Heart left ventricle (tissue), 16 donors: ENCODE measurements at regions of chr11 and their contacts with region 1.

Region 1: GRCh38 chr11:96464700-96465307 is 75.0 kb downstream of the JRKL start:
- DNase-seq: peak in 1 of 5 donors; percentile 12
- ATAC-seq: peak; percentile 78 to 95 (median 90)
- H3K4me3 ChIP-seq: peak overlapping the region in 7 of 12 donors; percentile 31 to 47 (median 37)
- H3K27ac ChIP-seq: peak overlapping the region in 1 of 12 donors; percentile 1
- H3K4me1 ChIP-seq: peaks cover 0 to 22% (median 2%) of the 10 kb centered on the region in 12 donors
- H3K27me3 ChIP-seq: no peaks in the 10 kb centered on the region
- CTCF ChIP-seq: peak; percentile 54 to 86 (median 71)
- POLR2A ChIP-seq: no peak

Region 2: DNA sequence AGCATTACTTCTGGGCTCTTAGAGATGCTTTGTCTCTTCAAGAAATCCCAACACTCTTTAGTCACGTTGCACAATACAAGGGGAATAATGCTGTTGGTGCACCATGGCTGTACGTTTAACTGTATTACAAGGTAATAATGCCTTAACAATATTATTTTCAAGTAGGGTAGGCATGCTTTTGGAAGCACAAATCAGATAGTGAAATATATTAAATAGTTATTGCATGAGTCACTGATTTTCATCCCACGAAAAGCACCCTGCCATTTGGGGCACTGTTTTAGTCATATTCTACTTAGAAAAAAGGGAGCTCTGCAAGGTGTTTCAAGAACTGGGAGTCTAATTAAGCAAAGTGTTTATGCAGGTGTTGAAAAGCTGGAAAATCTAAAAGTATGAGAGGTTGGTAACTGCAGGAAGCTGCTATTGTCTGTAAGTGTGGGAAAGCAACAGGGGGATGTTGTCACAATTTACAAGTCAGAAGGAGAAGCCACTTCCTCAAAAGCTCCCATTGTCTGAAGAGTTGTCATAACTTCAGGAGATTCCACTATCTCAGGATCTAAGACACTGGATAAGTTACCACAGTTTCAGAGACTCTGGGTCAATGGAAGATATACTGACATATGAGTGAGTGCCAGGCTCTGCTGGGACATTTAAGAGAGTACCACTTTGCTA is 143.2 kb after region 1 on chr11:
- intact Hi-C with region 1: no loop called
- DNase-seq: no peak
- ATAC-seq: no peak
- H3K4me3 ChIP-seq: no peak overlapping the region
- H3K27ac ChIP-seq: no peak overlapping the region
- H3K4me1 ChIP-seq: no peaks in the 10 kb centered on the region
- H3K27me3 ChIP-seq: no peaks in the 10 kb centered on the region
- CTCF ChIP-seq: no peak
- POLR2A ChIP-seq: no peak

Region 3: DNA sequence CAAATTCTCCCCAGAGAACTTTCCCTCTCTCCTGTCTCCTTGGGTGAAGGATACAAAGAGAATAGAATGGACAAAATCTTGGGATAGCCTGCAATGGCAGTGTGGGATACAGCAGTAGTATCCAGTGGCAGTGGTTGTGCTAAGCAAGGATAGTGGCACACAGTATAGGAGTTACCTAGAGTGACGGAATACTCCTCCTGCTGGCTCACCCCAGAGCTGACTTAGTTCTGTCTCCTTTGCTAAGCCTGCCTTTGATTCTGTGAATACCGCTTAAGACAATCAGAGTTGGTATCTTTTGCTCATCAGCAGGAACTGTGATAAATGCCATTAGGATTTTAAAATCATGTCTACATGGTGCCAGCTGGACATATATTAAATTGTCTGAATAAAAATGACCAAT is 329.3 kb after region 1 on chr11:
- intact Hi-C with region 1: loop called in 3 of 10 experiments (anchors 5 to 10 kb)
- DNase-seq: no peak
- ATAC-seq: no peak
- H3K4me3 ChIP-seq: no peak overlapping the region
- H3K27ac ChIP-seq: no peak overlapping the region
- H3K4me1 ChIP-seq: peaks cover 0 to 2% (median 0%) of the 10 kb centered on the region in 12 donors
- H3K27me3 ChIP-seq: no peaks in the 10 kb centered on the region
- CTCF ChIP-seq: no peak
- POLR2A ChIP-seq: no peak

Region 4: DNA sequence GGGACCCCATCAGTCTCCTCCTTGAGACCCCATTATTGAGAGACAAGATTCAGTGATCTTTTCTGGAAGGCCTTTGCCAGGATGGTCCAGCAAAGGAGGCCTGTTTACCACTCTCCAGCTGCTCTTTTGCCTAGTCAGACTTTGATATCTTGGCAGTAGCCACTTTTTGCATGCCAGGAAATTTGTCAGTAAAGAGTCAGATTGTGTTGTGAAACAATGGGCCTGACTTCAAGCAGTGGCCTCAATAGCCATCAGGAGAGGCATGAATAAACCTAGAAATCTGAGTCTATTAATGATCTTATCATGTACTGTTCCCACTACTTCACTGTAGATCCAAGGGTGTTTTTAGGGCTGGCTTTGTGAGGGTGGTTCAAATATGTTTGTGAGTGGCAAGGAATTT is 404.4 kb after region 1 on chr11:
- intact Hi-C with region 1: loop called in 1 of 10 experiments (anchors 10 kb)
- DNase-seq: peak in 1 of 5 donors; percentile 24
- ATAC-seq: peak; percentile 66 to 91 (median 83)
- H3K4me3 ChIP-seq: no peak overlapping the region
- H3K27ac ChIP-seq: peak overlapping the region in 3 of 12 donors; percentile 33 to 42 (median 39)
- H3K4me1 ChIP-seq: peaks cover 0 to 18% (median 0%) of the 10 kb centered on the region in 12 donors
- H3K27me3 ChIP-seq: no peaks in the 10 kb centered on the region
- CTCF ChIP-seq: no peak
- POLR2A ChIP-seq: no peak

Region 5: DNA sequence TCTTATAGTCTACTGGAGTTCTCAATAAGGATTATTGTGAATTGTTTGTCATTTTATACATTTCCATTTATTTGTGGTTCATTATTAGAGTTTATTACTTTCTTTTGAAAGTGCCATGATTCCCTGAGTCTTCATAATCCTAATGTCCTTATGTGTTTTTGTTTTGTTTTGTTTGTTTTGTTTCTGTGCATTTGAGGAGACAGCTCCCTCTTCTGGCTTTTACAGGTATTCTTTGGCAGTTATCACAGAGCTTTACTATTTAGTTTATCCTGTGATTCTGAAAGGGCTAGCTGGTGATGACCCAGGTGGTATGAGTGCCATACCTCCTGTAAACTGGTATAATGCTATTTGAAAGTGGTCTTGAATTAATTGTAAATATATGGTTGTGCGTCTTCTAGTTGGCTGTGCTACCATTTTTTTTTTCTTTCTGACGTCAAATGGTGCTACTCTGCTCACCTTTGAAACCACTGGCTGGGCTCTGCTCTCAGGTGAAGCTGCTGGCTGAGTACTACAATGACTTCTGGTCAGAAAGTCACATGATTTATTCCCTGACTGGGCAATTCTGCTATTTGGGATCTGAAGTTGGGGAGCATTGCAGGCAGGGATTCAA is 676.2 kb after region 1 on chr11:
- intact Hi-C with region 1: loop called in 6 of 10 experiments (anchors 2 to 10 kb)
- DNase-seq: no peak
- ATAC-seq: no peak
- H3K4me3 ChIP-seq: no peak overlapping the region
- H3K27ac ChIP-seq: no peak overlapping the region
- H3K4me1 ChIP-seq: no peaks in the 10 kb centered on the region
- H3K27me3 ChIP-seq: no peaks in the 10 kb centered on the region
- CTCF ChIP-seq: peak in 11 of 12 donors; percentile 17 to 66 (median 42)
- POLR2A ChIP-seq: no peak